Heart right ventricle (tissue), 16 donors: ENCODE measurements at regions of chr15 and their contacts with region 1.

Region 1: GRCh38 chr15:84929744-84930371 is 45.4 kb downstream of the SLC28A1 start:
- DNase-seq: no peak
- ATAC-seq: no peak
- H3K4me3 ChIP-seq: no peak overlapping the region
- H3K27ac ChIP-seq: no peak overlapping the region
- H3K4me1 ChIP-seq: peaks cover 0 to 19% (median 12%) of the 10 kb centered on the region in 9 donors
- H3K27me3 ChIP-seq: no peaks in the 10 kb centered on the region
- CTCF ChIP-seq: no peak

Region 2: DNA sequence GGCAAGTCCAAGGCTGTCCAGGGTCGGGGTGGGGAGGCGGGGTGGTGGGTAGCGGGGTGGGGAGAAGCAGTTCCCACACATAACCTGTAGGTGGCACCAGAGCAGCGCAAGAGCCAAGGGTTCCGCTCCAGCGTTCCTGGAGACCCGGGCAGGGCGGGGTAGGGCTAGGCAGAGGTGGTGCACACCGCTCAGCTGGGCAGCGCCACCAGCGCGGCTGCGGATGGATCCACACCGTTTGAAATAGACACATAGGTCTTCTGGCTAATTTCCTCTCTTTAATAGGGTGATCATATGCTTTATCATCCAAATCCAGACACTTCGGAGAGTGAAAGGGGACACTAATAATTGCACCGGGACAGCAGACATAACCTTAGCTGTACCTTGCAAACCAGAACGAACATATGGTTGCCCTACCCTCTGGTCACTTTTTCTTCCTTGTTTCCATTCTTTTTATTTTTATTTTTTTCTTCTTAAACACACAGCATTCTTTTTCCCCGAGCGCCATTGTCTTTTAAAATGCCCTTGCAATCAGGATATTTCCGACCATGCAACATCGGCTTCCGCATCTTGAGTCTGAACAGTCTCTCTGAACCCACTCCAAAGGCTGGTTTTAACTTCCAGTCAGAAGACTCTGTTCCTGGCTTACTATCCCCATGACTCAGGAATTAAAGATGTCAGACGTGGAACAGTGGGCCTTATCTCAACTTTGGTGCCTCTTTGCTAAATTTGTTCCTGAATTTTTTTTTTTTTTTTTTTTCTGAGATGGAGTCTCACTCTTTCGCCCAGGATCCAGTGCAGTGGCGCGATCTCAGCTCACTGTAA is 341.6 kb before region 1 on chr15:
- intact Hi-C with region 1: loop called in 6 of 10 experiments (anchors 2 to 10 kb)
- DNase-seq: peak; percentile 84 to 86
- ATAC-seq: peak; percentile 98 to 99 (median 98)
- H3K4me3 ChIP-seq: peak overlapping the region in 8 of 10 donors; percentile 14 to 61 (median 48)
- H3K27ac ChIP-seq: no peak overlapping the region
- H3K4me1 ChIP-seq: peaks cover 0 to 10% (median 4%) of the 10 kb centered on the region in 9 donors
- H3K27me3 ChIP-seq: no peaks in the 10 kb centered on the region
- CTCF ChIP-seq: peak; percentile 85 to 97 (median 94)

Region 3: GRCh38 chr15:84600851-84601838 is 328.7 kb before region 1 on chr15 and contains the start of gene ZSCAN2:
- intact Hi-C with region 1: loop called in 4 of 10 experiments (anchors 5 to 10 kb)
- DNase-seq: peak; percentile 94 to 96
- ATAC-seq: peak; percentile 98 to 99 (median 99)
- H3K4me3 ChIP-seq: peak within 1 kb of the TSS; percentile 69 to 99 (median 82)
- H3K27ac ChIP-seq: peak within 1 kb of the TSS in 9 of 10 donors; percentile 46 to 80 (median 72)
- H3K4me1 ChIP-seq: peaks cover 0 to 51% (median 15%) of the 10 kb centered on the region in 9 donors
- H3K27me3 ChIP-seq: no peaks in the 10 kb centered on the region
- CTCF ChIP-seq: no peak
- total RNA-seq, gene ZSCAN2: 3.7 to 8.1 (median 5.9) TPM

Region 4: GRCh38 chr15:84818261-84819131 is 111.4 kb before region 1 on chr15:
- intact Hi-C with region 1: loop called in 1 of 10 experiments (anchors 5 kb)
- DNase-seq: peak in 1 of 2 donors; percentile 71
- ATAC-seq: peak in 7 of 8 donors; percentile 12 to 63 (median 30)
- H3K4me3 ChIP-seq: peak overlapping the region; percentile 31 to 73 (median 64)
- H3K27ac ChIP-seq: peak overlapping the region; percentile 91 to 99 (median 96)
- H3K4me1 ChIP-seq: peaks cover 14 to 78% (median 70%) of the 10 kb centered on the region in 9 donors
- H3K27me3 ChIP-seq: no peaks in the 10 kb centered on the region
- CTCF ChIP-seq: peak in 4 of 9 donors; percentile 9 to 41 (median 24)

Region 5: GRCh38 chr15:84863565-84864443 is 66.1 kb before region 1 on chr15:
- intact Hi-C with region 1: loop called in 9 of 10 experiments (anchors 5 to 10 kb)
- DNase-seq: no peak
- ATAC-seq: peak; percentile 8 to 77 (median 40)
- H3K4me3 ChIP-seq: peak overlapping the region in 5 of 10 donors; percentile 3 to 29 (median 21)
- H3K27ac ChIP-seq: peak overlapping the region in 8 of 10 donors; percentile 13 to 65 (median 48)
- H3K4me1 ChIP-seq: peaks cover 11 to 51% (median 29%) of the 10 kb centered on the region in 9 donors
- H3K27me3 ChIP-seq: no peaks in the 10 kb centered on the region
- CTCF ChIP-seq: peak in 8 of 9 donors; percentile 9 to 61 (median 46)